ENCODE measurements at regions of chr21 and their contacts with region 1.

Region 1: GRCh38 chr21:45973659-45974072 is 7.9 kb upstream of the COL6A1 start:
- DNase-seq: peak; percentile 73 to 90
- ATAC-seq: peak; percentile 79 to 82 (median 82)
- H3K4me3 ChIP-seq: peak overlapping the region; percentile 50
- H3K4me3 Mint-ChIP-seq: peak overlapping the region; percentile 95
- H3K27ac ChIP-seq: no peak overlapping the region
- H3K27ac Mint-ChIP-seq: peak overlapping the region; percentile 72 to 91
- H3K4me1 ChIP-seq: peaks cover 44% of the 10 kb centered on the region
- H3K4me1 Mint-ChIP-seq: peaks cover 19 to 25% of the 10 kb centered on the region in 2 donors
- H3K27me3 ChIP-seq: peaks cover 43% of the 10 kb centered on the region
- H3K27me3 Mint-ChIP-seq: peaks cover 13 to 22% of the 10 kb centered on the region in 2 donors
- CTCF ChIP-seq: peak; percentile 73

Region 2: GRCh38 chr21:46052703-46053651 is 79.3 kb after region 1 on chr21:
- intact Hi-C with region 1: loop called (anchors 5 kb)
- DNase-seq: peak; percentile 60 to 61
- ATAC-seq: peak; percentile 59 to 82 (median 72)
- H3K4me3 ChIP-seq: no peak overlapping the region
- H3K4me3 Mint-ChIP-seq: no peak overlapping the region
- H3K27ac ChIP-seq: peak overlapping the region; percentile 82
- H3K27ac Mint-ChIP-seq: peak overlapping the region; percentile 76 to 79
- H3K4me1 ChIP-seq: peaks cover 29% of the 10 kb centered on the region
- H3K4me1 Mint-ChIP-seq: peaks cover 10 to 11% of the 10 kb centered on the region in 2 donors
- H3K27me3 ChIP-seq: peaks cover 3% of the 10 kb centered on the region
- H3K27me3 Mint-ChIP-seq: peaks cover 3 to 7% of the 10 kb centered on the region in 2 donors
- CTCF ChIP-seq: no peak

Region 3: GRCh38 chr21:46097336-46098293 is 123.9 kb after region 1 on chr21 and contains the start of gene COL6A2:
- intact Hi-C with region 1: loop called (anchors 5 kb)
- DNase-seq: peak; percentile 45 to 69
- ATAC-seq: peak; percentile 68 to 79 (median 79)
- H3K4me3 ChIP-seq: peak within 1 kb of the TSS; percentile 19
- H3K4me3 Mint-ChIP-seq: peak within 1 kb of the TSS; percentile 74
- H3K27ac ChIP-seq: no peak within 1 kb of the TSS
- H3K27ac Mint-ChIP-seq: no peak within 1 kb of the TSS
- H3K4me1 ChIP-seq: peaks cover 27% of the 10 kb centered on the region
- H3K4me1 Mint-ChIP-seq: peaks cover 7 to 16% of the 10 kb centered on the region in 2 donors
- H3K27me3 ChIP-seq: peaks cover 11% of the 10 kb centered on the region
- H3K27me3 Mint-ChIP-seq: peaks cover 28 to 35% of the 10 kb centered on the region in 2 donors
- CTCF ChIP-seq: no peak
- total RNA-seq, gene COL6A2: 93.9 to 110 (median 97.2) TPM

Region 4: GRCh38 chr21:46144464-46145070 is 170.9 kb after region 1 on chr21:
- intact Hi-C with region 1: loop called (anchors 2 kb)
- DNase-seq: no peak
- ATAC-seq: no peak
- H3K4me3 ChIP-seq: no peak overlapping the region
- H3K4me3 Mint-ChIP-seq: peak overlapping the region; percentile 64
- H3K27ac ChIP-seq: no peak overlapping the region
- H3K27ac Mint-ChIP-seq: peak overlapping the region; percentile 85 to 88
- H3K4me1 ChIP-seq: peaks cover 4% of the 10 kb centered on the region
- H3K4me1 Mint-ChIP-seq: peaks cover 8 to 12% of the 10 kb centered on the region in 2 donors
- H3K27me3 ChIP-seq: no peaks in the 10 kb centered on the region
- H3K27me3 Mint-ChIP-seq: peaks cover 0 to 4% of the 10 kb centered on the region in 2 donors
- CTCF ChIP-seq: no peak

Measured in natural killer cell (primary cell).